ENCODE measurements at regions of chr2 and their contacts with region 1.

Region 1: DNA sequence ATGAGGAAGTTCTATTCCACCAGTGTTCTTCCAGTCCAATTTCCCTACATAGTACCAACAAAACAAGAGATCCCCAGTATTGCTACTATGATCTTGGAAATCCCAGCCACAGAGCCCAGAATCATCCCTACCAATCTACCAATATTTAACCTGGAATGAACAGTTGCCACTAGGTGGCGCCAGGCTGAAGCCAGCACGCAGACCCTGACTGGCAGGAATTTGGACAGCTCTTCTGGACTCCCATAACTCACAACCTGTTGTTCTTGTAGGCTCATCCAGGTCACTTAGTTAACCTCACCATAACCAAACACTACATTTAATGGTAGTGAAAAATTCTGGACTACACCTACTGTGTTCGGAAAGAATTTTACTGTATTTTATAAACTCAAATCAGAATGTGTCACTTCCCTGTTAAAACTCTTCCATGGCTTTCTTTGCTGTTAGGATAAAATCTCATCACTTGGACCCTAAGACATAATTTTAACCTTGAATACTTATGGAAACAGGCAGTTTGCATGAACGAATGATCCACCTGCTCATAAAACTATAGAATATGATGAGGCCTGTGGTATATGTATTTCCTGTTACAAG is 59.8 kb upstream of the SLC38A11 start:
- DNase-seq: peak; percentile 80

Region 2: DNA sequence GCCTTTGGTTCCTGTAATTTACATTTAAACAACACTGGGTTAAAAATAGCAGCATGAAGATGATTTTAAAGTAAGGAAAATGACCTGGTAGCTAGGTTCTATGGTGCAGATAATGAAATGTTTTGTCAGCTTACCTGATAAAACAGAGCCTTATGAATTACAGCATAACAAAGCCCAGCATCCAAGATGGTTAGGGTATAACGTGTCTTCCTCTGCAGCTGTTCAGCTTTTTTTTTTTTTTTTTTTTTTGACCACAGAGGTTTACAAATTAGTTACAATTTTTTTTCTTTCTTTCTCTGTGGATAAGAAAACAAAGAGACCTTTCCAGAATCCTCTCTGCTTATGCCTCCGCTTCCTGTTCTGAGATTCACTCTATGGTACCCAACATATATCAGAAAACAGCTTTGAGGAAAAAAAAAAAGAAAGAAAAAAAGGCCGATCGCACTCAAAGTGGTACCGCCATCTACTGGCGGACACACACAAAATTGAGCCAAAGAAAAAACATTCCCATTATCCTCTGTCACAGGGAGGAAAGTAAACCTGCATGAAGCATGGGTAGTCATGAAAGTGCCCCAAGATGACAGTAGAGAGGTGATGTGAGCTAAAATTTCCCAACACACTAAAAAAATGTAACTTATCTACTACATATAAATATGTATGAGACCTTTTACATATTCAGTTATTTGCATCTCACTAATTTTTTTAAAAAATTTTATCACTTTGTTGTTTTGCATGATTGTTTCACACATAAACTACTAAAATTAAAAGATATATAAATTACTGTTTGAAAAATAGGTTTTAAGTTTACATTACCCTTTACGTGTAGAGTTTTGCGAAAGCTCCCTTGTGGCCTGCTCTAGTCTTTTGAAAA is 188.8 kb after region 1 on chr2 and contains the start of gene SCN3A:
- intact Hi-C with region 1: loop called (anchors 5 to 10 kb)
- DNase-seq: no peak
- total RNA-seq, gene SCN3A: 5.1 to 5.8 TPM

Region 3: GRCh38 chr2:165281387-165281786 is 266.2 kb after region 1 on chr2:
- intact Hi-C with region 1: loop called in 1 of 2 experiments (anchors 10 kb)
- DNase-seq: no peak

Region 4: GRCh38 chr2:165417009-165417408 is 401.9 kb after region 1 on chr2:
- intact Hi-C with region 1: no loop called
- DNase-seq: no peak

Region 5: GRCh38 chr2:165698444-165698894 is 683.3 kb after region 1 on chr2:
- intact Hi-C with region 1: loop called in 1 of 2 experiments (anchors 10 kb)
- DNase-seq: no peak